ENCODE measurements at regions of chr5 and their contacts with region 1.

Region 1: DNA sequence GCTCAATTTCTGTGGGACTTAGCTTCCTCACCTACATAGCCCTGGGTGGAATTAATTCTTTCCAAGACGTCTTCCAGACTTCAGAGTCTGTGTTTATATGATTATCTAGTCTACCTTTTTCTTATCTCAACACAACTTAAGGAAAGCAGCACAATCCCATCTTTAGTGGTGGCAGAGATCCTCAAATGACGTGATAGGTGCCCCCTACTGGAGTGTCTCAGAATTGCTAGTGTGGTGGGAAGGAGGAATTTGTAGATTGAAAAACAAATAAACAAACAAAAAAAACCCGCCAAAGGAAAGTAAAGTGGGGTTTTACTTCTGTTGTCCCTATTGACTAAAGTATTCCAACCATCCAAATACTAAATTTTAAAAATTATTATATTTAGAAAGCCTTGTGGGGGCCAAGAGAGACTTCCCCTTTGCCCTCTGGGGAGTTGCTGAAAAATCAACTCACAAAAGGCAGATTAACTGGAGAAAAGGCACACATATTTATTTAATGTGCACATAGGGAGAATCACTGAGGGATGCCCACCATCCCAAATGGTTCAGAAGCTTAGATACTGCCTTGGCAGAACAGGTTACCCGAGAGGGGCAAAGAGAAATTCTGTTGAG is 283.3 kb downstream of the TMEM167A start:
- DNase-seq: peak in 1 of 2 donors; percentile 6
- ATAC-seq: no peak
- H3K4me3 ChIP-seq: no peak overlapping the region
- H3K27ac ChIP-seq: no peak overlapping the region
- H3K4me1 ChIP-seq: no peaks in the 10 kb centered on the region
- H3K27me3 ChIP-seq: no peaks in the 10 kb centered on the region
- CTCF ChIP-seq: peak; percentile 33 to 74 (median 66)

Region 2: GRCh38 chr5:82364497-82364896 is 429.4 kb before region 1 on chr5:
- intact Hi-C with region 1: loop called in 3 of 10 experiments (anchors 5 to 10 kb)
- DNase-seq: peak in 1 of 2 donors; percentile 35
- ATAC-seq: peak in 7 of 8 donors; percentile 67 to 90 (median 87)
- H3K4me3 ChIP-seq: no peak overlapping the region
- H3K27ac ChIP-seq: peak overlapping the region in 2 of 10 donors; percentile 29 to 51
- H3K4me1 ChIP-seq: peaks cover 0 to 26% (median 4%) of the 10 kb centered on the region in 9 donors
- H3K27me3 ChIP-seq: no peaks in the 10 kb centered on the region
- CTCF ChIP-seq: peak in 8 of 9 donors; percentile 28 to 64 (median 48)